A549 (cell line): ENCODE measurements at regions of chr2 and their contacts with region 1.

Region 1: GRCh38 chr2:74250189-74250631 is 51.8 kb downstream of the MTHFD2 start:
- DNase-seq: peak; percentile 56 to 78
- ATAC-seq: peak; percentile 74 to 89; a peak in 5 of 6 replicates
- H3K4me3 ChIP-seq: no peak overlapping the region
- H3K27ac ChIP-seq: no peak overlapping the region
- H3K4me1 ChIP-seq: no peaks in the 10 kb centered on the region
- CTCF ChIP-seq: peak; percentile 92
- EP300 ChIP-seq: no peak
- POLR2A ChIP-seq: no peak
- RAD21 ChIP-seq: peak; percentile 78 to 79

Region 2: DNA sequence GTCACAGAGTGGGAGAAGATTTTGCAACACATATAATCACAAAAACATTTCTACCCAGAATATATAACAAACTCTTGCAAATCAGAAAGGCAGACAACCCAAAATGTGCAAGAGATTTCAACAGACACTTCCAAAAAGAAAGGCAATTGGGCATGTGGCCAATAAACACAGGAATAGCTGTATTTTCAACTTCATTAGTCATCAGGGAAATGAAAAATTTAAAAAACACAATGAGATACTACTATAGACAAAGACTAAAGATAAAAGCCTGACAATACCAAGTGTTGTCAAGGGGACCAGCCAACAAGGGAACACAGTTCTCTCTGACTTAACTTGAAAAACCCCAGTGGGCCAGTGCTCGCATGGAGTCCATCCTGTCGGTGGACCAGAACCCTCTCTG is 11.3 kb before region 1 on chr2:
- CTCF ChIA-PET with region 1: interaction called, 22 read pairs
- POLR2A ChIA-PET with region 1: no interaction called
- DNase-seq: no peak
- ATAC-seq: no peak
- H3K4me3 ChIP-seq: no peak overlapping the region
- H3K27ac ChIP-seq: no peak overlapping the region
- H3K4me1 ChIP-seq: no peaks in the 10 kb centered on the region
- CTCF ChIP-seq: no peak
- EP300 ChIP-seq: no peak
- POLR2A ChIP-seq: no peak
- RAD21 ChIP-seq: no peak

Region 3: GRCh38 chr2:74267068-74267467 is 16.9 kb after region 1 on chr2:
- CTCF ChIA-PET with region 1: interaction called, 69 read pairs
- POLR2A ChIA-PET with region 1: no interaction called
- DNase-seq: peak; percentile 55 to 56
- ATAC-seq: peak; percentile 73 to 77; a peak in 4 of 6 replicates
- H3K4me3 ChIP-seq: no peak overlapping the region
- H3K27ac ChIP-seq: no peak overlapping the region
- H3K4me1 ChIP-seq: 0 out of 3 replicates have a peak, but pooled peaks cover 4% of the 10 kb centered on the region
- CTCF ChIP-seq: peak; percentile 30; the same call in 2 of the 3 replicates
- EP300 ChIP-seq: no peak
- POLR2A ChIP-seq: no peak
- RAD21 ChIP-seq: peak in 1 of 2 experiments; percentile 45; a peak in 1 of 5 replicates

Region 4: GRCh38 chr2:74345272-74345943 is 95.2 kb after region 1 on chr2:
- CTCF ChIA-PET with region 1: interaction called, 12 read pairs
- POLR2A ChIA-PET with region 1: no interaction called
- DNase-seq: no peak
- ATAC-seq: peak in 1 of 2 experiments; percentile 30; a peak in 2 of 6 replicates
- H3K4me3 ChIP-seq: no peak overlapping the region
- H3K27ac ChIP-seq: no peak overlapping the region
- H3K4me1 ChIP-seq: no peaks in the 10 kb centered on the region
- CTCF ChIP-seq: no peak
- EP300 ChIP-seq: no peak
- POLR2A ChIP-seq: 0 out of 2 replicates have a peak, but pooled peaks have one; percentile 7
- RAD21 ChIP-seq: no peak

Region 5: GRCh38 chr2:74399785-74400184 is 149.6 kb after region 1 on chr2:
- CTCF ChIA-PET with region 1: interaction called, 10 read pairs
- POLR2A ChIA-PET with region 1: no interaction called
- DNase-seq: peak; percentile 45 to 56
- ATAC-seq: peak; percentile 84 to 89
- H3K4me3 ChIP-seq: no peak overlapping the region
- H3K27ac ChIP-seq: no peak overlapping the region
- H3K4me1 ChIP-seq: no peaks in the 10 kb centered on the region
- CTCF ChIP-seq: peak; percentile 42
- EP300 ChIP-seq: no peak
- POLR2A ChIP-seq: no peak
- RAD21 ChIP-seq: peak; percentile 44 to 61